ENCODE measurements at regions of chr17 and their contacts with region 1.

Region 1: DNA sequence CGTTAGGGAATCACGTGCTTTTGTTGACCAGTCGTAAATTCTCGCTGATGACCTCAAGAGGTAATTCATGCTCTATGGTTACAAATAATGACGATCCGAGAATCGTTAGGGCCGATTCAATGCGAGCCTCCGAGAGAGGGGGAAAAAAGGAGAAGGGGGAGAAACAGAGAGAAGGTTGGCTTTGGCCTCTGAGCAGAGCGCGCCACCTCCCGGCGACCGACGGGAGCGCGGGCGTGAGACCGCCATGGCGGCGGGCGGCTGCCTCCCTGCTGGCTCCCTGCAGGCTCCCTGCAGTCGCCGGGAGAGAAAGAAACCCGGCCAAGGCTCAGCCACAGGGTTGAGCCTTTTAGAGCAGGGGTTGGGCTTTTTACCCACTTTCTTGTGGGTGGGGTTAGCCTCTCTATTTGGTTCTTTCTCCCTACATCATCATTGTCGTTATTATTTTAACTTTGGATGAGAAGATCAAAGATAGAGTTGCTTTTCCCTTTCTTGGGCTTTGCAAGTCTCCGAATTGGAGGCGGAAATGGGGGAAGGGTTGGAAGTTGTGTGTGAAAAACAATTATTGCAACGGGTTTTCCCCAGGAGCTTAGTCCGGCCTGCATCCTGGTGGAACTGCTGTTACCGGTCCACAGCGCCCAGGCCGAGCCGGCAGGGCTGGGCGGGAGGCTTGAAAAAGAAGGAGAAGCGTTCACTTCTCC is 410 bp upstream of the HOXB5 start:
- DNase-seq: peak; percentile 78
- H3K4me3 Mint-ChIP-seq: peak overlapping the region; percentile 65
- H3K27ac Mint-ChIP-seq: no peak overlapping the region
- H3K4me1 Mint-ChIP-seq: peaks cover 59% of the 10 kb centered on the region
- H3K27me3 Mint-ChIP-seq: peaks cover 91% of the 10 kb centered on the region

Region 2: DNA sequence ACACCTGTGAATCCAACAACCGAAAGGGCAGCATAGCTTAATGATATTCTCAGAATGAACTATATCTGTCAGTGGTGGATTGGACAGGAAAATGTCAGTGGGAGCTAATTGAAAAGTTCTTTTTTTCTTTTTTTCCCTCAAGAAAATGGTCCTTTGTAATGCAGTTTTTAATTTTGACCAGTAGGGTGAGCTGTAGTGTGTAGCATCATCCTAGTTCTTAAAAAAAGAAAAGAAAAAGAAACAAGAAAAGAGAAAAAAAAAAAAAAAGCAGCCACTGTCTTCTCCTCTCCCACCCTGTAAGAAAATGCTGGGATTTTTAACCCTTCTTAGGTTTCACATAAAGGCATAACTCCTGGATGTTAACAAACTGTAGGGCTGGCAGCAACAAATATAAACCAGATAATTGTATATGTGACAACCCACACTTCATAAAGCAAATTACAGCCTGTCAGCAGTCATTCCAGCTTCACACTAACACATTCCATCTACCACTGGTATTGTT is 242.1 kb before region 1 on chr17:
- CTCF ChIA-PET with region 1: interaction called, 15 read pairs
- POLR2A ChIA-PET with region 1: no interaction called
- DNase-seq: no peak
- H3K4me3 Mint-ChIP-seq: no peak overlapping the region
- H3K27ac Mint-ChIP-seq: no peak overlapping the region
- H3K4me1 Mint-ChIP-seq: peaks cover 12% of the 10 kb centered on the region
- H3K27me3 Mint-ChIP-seq: no peaks in the 10 kb centered on the region

Region 3: DNA sequence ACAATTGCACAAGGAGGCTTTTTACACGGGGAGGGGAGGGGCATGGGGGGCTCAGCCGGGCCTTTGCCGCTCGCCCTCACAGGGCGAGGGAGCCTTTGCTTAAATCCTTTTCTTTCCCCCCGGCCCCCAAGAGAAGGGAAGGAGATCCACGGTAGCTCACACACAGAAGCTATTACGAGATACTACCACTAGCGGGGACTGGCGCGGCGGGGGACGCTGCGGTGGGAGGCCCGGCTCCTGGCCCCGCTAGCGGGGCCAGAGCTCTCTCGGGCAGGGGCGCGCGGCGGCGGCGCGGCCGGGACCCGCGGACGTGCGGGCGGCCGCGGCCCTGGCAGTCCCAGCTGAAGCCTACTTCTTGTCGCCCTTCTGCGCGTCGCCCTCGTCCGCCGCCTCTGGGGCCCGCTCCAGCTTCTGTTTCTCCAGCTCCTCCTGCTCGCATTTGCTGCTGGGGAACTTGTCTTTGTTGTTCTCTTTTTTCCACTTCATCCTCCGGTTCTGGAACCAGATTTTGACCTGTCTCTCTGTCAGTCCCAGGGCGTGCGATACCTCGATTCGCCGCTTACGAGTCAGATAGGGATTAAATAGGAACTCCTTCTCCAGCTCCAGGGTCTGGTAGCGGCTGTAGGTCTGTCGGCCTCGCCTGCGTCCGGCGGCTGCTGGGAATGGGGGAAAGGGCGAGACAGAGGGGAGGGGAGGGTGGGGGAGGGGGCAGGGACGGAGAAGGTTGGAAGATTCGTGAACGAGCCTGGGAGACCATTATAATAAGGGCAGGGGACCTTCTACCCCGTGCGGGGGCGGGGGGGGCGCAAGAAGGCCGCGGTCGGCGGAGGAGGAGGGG is 19.1 kb after region 1 on chr17:
- CTCF ChIA-PET with region 1: interaction called, 18 read pairs
- POLR2A ChIA-PET with region 1: interaction called, 3 read pairs
- DNase-seq: peak; percentile 36
- H3K4me3 Mint-ChIP-seq: peak overlapping the region; percentile 52
- H3K27ac Mint-ChIP-seq: peak overlapping the region; percentile 33
- H3K4me1 Mint-ChIP-seq: peaks cover 40% of the 10 kb centered on the region
- H3K27me3 Mint-ChIP-seq: peaks cover 84% of the 10 kb centered on the region

Region 4: DNA sequence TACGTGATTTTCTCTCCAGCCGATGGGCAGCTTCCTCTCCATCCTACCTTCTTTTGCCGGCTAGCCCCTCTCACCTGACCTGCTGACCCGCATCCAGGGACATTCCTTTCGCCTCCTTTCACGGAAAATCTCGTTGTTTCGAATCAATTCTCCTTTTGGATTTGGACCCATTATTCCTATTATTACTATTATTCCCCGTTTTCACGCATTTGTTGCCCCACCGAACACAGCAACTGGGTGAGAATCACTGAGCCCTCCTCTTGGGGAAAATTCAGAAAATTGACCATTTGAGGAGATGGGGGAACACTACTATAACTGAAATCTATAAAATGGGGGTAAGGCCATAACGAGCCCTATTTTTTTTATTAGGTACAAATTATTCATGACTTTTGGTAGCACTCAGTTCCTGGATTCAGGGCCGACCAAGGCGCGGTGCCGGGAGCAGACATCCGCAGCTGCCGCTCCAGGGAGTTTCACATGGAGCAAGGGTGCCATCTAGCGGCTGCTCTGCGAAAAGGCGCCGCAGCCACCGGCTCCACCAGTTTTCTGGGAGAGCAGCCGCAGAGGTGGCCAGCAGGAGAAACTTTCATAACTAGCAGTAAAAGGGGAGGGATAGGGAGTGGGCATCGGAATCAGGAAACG is 24.4 kb after region 1 on chr17:
- CTCF ChIA-PET with region 1: interaction called, 18 read pairs
- POLR2A ChIA-PET with region 1: no interaction called
- DNase-seq: peak; percentile 79
- H3K4me3 Mint-ChIP-seq: peak overlapping the region; percentile 30
- H3K27ac Mint-ChIP-seq: peak overlapping the region; percentile 36
- H3K4me1 Mint-ChIP-seq: peaks cover 31% of the 10 kb centered on the region
- H3K27me3 Mint-ChIP-seq: peaks cover 92% of the 10 kb centered on the region

Measured in activated CD4-positive, alpha-beta T cell treated with anti-CD3 and anti-CD28 coated beads, Interleukin-2, amount 10 ng/mL, durations not matched to agents 7 days and 5 days (primary cell).